MCF 10A (cell line): ENCODE measurements at regions of chr10 and their contacts with region 1.

Region 1: DNA sequence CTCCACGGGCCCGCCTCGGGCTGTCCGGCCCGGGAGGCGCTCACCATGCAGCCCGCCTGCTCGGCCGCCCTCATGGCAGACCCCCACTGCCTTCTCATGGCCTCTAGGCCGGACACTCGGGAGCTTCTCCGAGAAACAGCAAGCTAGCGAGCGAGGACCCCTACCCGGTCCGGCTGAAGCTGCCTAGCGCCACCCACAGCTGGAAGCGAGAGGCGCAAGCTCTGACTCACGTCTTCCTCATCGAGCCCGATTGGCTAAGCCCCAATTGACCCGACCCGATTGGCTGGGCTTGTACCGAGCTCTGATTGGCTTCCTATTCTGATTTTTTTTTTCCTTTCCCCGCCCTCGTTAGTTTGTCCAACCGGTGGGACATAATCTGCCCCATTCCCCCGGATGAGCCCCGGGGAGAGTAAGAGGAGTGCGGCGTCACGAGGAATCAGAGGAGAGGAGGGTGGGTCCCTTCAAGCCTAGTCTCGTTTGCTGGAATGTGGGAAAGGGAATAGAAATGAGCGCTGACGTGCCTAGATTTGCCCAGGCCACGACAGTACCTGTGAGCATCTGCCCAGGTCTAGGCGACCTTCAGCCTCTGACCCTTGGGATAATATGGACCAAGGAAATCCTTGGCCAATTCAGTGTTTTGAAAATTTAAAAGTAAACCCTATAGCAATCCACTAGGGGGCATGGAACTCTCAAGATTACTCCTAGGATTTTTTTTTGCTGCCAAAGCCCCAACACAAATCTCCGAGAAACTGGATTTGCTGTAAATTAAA is at the start of gene TYSND1:
- DNase-seq: peak; percentile 99
- H3K4me3 Mint-ChIP-seq: peak within 1 kb of the TSS; percentile 80
- H3K27ac Mint-ChIP-seq: peak within 1 kb of the TSS; percentile 87
- H3K4me1 Mint-ChIP-seq: peaks cover 14% of the 10 kb centered on the region
- H3K27me3 Mint-ChIP-seq: no peaks in the 10 kb centered on the region
- CTCF ChIP-seq: peak; percentile 65
- total RNA-seq, gene TYSND1: 14.6 and 16.5 TPM in 2 replicates

Region 2: DNA sequence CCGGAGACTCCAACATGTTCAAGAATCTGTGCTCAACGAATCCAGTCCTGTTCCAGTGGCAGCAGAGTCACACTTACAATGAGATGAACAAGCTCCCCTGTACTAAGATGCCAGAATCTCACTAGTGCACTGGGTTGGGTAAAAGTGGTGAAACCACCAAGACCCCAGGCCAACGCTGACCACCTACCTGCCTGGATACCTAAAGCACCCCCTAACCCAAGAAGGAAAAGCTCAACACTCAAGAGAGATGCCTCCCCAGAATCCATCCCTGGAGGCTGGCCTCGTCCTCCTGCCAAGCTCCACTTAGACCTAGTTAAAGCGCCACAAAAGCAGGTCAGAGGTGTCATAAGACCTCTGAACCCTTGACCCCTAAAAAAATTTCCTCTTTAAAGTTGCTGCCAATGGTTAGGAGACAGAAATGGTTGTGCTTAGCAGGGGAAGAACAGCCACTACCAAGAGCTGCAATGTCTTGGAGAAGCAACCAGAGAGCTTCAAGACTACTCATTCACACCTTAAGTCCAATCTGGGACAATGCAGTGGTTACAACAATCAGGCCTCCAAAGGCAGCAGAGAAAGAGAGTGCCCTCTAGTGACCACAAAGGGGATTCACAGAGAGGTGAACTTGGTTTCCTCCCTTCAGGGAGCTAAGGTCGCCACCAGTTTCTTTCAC is 188.7 kb before region 1 on chr10:
- CTCF ChIA-PET with region 1: interaction called, 10 read pairs
- POLR2A ChIA-PET with region 1: interaction called, 4 read pairs
- intact Hi-C with region 1: no loop called
- DNase-seq: peak; percentile 71
- H3K4me3 Mint-ChIP-seq: no peak overlapping the region
- H3K27ac Mint-ChIP-seq: no peak overlapping the region
- H3K4me1 Mint-ChIP-seq: peaks cover 13% of the 10 kb centered on the region
- H3K27me3 Mint-ChIP-seq: peaks cover 1% of the 10 kb centered on the region
- CTCF ChIP-seq: peak; percentile 82

Region 3: GRCh38 chr10:70007116-70007820 is 139.4 kb before region 1 on chr10:
- CTCF ChIA-PET with region 1: no interaction called
- POLR2A ChIA-PET with region 1: no interaction called
- intact Hi-C with region 1: no loop called
- DNase-seq: no peak
- H3K4me3 Mint-ChIP-seq: no peak overlapping the region
- H3K27ac Mint-ChIP-seq: no peak overlapping the region
- H3K4me1 Mint-ChIP-seq: no peaks in the 10 kb centered on the region
- H3K27me3 Mint-ChIP-seq: peaks cover 100% of the 10 kb centered on the region
- CTCF ChIP-seq: no peak

Region 4: DNA sequence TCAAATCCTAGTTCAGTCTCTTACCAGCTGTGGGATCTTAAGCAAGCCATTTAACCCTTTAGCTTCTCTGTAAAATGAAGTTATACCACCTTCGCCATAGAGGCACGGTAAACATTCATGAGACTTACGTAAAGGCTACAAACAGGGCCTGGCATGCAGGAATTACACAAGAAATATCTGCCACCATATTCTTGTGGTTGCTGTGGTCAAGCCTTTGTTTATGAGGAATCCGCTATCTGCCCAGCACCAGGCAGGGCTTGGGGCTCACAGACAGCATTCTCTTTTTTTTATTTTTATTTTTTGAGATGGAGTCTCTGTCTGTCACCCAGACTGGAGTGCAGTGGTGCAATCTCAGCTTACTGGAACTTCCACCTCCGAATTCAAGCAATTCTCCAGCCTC is 23.9 kb before region 1 on chr10:
- CTCF ChIA-PET with region 1: interaction called, 75 read pairs
- POLR2A ChIA-PET with region 1: interaction called, 7 read pairs
- intact Hi-C with region 1: loop called (anchors 2 kb)
- DNase-seq: peak; percentile 7
- H3K4me3 Mint-ChIP-seq: no peak overlapping the region
- H3K27ac Mint-ChIP-seq: no peak overlapping the region
- H3K4me1 Mint-ChIP-seq: no peaks in the 10 kb centered on the region
- H3K27me3 Mint-ChIP-seq: no peaks in the 10 kb centered on the region
- CTCF ChIP-seq: no peak

Region 5: DNA sequence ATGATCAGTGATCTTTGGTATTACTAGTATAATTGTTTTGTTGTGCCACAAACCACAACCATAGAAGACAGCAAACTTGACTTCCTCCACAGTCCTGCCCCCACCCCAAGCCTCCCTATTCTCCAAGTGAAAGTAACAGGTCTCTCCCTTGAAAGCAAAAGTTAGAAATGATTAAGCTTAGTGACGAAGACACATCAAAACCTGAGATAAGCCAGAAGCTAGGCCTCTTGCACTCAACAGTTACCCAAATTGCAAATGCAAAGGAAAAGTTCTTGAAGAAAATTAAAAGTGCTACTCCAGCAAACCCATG is 16.2 kb after region 1 on chr10:
- CTCF ChIA-PET with region 1: interaction called, 14 read pairs
- POLR2A ChIA-PET with region 1: interaction called, 16 read pairs
- intact Hi-C with region 1: no loop called
- DNase-seq: no peak
- H3K4me3 Mint-ChIP-seq: no peak overlapping the region
- H3K27ac Mint-ChIP-seq: peak overlapping the region; percentile 75
- H3K4me1 Mint-ChIP-seq: peaks cover 36% of the 10 kb centered on the region
- H3K27me3 Mint-ChIP-seq: no peaks in the 10 kb centered on the region
- CTCF ChIP-seq: no peak

Region 6: GRCh38 chr10:70191972-70192305 is 45.3 kb after region 1 on chr10:
- CTCF ChIA-PET with region 1: interaction called, 17 read pairs
- POLR2A ChIA-PET with region 1: interaction called, 79 read pairs
- intact Hi-C with region 1: loop called (anchors 1 kb)
- DNase-seq: peak; percentile 86
- H3K4me3 Mint-ChIP-seq: peak overlapping the region; percentile 16
- H3K27ac Mint-ChIP-seq: peak overlapping the region; percentile 73
- H3K4me1 Mint-ChIP-seq: peaks cover 41% of the 10 kb centered on the region
- H3K27me3 Mint-ChIP-seq: no peaks in the 10 kb centered on the region
- CTCF ChIP-seq: no peak

Region 7: DNA sequence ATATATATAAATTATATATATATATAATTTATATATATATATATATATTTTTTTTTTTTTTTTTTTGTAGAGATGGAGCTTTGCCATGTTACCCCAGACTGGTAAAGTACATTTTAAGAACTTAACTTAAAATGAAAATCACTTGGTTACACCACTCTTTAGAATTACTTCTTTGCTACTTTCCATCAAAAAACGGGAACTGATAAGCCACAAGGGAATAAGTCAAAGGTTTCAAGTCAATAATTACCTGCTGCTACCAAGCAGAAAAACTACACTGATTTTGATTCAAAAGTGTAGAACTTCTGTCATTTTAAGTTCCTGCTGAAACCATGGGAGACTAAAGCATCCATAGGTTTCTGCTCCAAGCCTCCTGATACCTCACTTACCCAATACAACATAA is 74.4 kb after region 1 on chr10:
- CTCF ChIA-PET with region 1: interaction called, 14 read pairs
- POLR2A ChIA-PET with region 1: interaction called, 42 read pairs
- intact Hi-C with region 1: loop called (anchors 1 kb)
- DNase-seq: no peak
- H3K4me3 Mint-ChIP-seq: peak overlapping the region; percentile 45
- H3K27ac Mint-ChIP-seq: peak overlapping the region; percentile 87
- H3K4me1 Mint-ChIP-seq: peaks cover 32% of the 10 kb centered on the region
- H3K27me3 Mint-ChIP-seq: no peaks in the 10 kb centered on the region
- CTCF ChIP-seq: no peak

Region 8: DNA sequence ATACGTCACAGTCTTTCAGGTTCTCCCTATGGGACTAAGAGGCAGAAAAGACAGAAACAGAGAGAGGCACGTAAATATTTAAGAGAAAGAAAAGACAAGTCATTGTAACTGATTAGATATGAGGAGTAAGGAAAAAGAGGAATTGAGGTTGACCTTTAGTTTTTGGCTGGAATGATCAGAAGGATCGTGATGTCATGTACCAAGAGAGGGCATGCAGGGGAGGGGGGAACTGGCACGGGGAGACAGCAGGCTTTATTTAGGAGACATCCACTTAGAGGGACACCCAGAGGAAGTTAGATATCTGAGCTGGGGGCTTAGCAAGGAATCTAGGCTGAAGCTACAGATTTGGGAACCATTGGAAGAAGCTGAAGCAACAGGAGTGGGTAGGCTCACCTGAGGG is 245.0 kb after region 1 on chr10:
- CTCF ChIA-PET with region 1: interaction called, 4 read pairs
- POLR2A ChIA-PET with region 1: interaction called, 7 read pairs
- intact Hi-C with region 1: loop called (anchors 1 kb)
- DNase-seq: no peak
- H3K4me3 Mint-ChIP-seq: no peak overlapping the region
- H3K27ac Mint-ChIP-seq: no peak overlapping the region
- H3K4me1 Mint-ChIP-seq: peaks cover 10% of the 10 kb centered on the region
- H3K27me3 Mint-ChIP-seq: peaks cover 12% of the 10 kb centered on the region
- CTCF ChIP-seq: no peak